Naive thymus-derived CD4-positive, alpha-beta T cell (primary cell): ENCODE measurements at regions of chr12 and their contacts with region 1.

Region 1: GRCh38 chr12:111451649-111452129 is 46.0 kb downstream of the SH2B3 start:
- DNase-seq: peak in 7 of 9 donors; percentile 48 to 78 (median 73)
- ATAC-seq: peak; percentile 77
- H3K4me3 ChIP-seq: no peak overlapping the region
- H3K4me3 Mint-ChIP-seq: peak overlapping the region in 1 of 10 donors; percentile 13
- H3K27ac ChIP-seq: peak overlapping the region; percentile 12
- H3K27ac Mint-ChIP-seq: peak overlapping the region in 8 of 9 donors; percentile 0 to 81 (median 25)
- H3K4me1 ChIP-seq: peaks cover 6 to 17% of the 10 kb centered on the region in 2 donors
- H3K4me1 Mint-ChIP-seq: peaks cover 12 to 50% (median 29%) of the 10 kb centered on the region in 7 donors
- H3K27me3 ChIP-seq: no peaks in the 10 kb centered on the region
- H3K27me3 Mint-ChIP-seq: no peaks in the 10 kb centered on the region

Region 2: GRCh38 chr12:111405149-111405860 is 46.4 kb before region 1 on chr12:
- CTCF ChIA-PET with region 1: interaction called, 462 read pairs
- POLR2A ChIA-PET with region 1: interaction called, 64 read pairs
- intact Hi-C with region 1: loop called (anchors 1 kb)
- DNase-seq: peak; percentile 96 to 98 (median 97)
- ATAC-seq: peak; percentile 89
- H3K4me3 ChIP-seq: peak overlapping the region; percentile 68
- H3K4me3 Mint-ChIP-seq: peak overlapping the region; percentile 78 to 96 (median 90)
- H3K27ac ChIP-seq: peak overlapping the region; percentile 97
- H3K27ac Mint-ChIP-seq: peak overlapping the region; percentile 75 to 96 (median 89)
- H3K4me1 ChIP-seq: peaks cover 50 to 53% of the 10 kb centered on the region in 2 donors
- H3K4me1 Mint-ChIP-seq: peaks cover 34 to 63% (median 53%) of the 10 kb centered on the region in 7 donors
- H3K27me3 ChIP-seq: no peaks in the 10 kb centered on the region
- H3K27me3 Mint-ChIP-seq: no peaks in the 10 kb centered on the region

Region 3: GRCh38 chr12:111434680-111435338 is 16.9 kb before region 1 on chr12:
- CTCF ChIA-PET with region 1: interaction called, 32 read pairs
- POLR2A ChIA-PET with region 1: interaction called, 14 read pairs
- intact Hi-C with region 1: loop called (anchors 1 to 2 kb)
- DNase-seq: peak; percentile 62 to 94 (median 83)
- ATAC-seq: peak; percentile 83
- H3K4me3 ChIP-seq: peak overlapping the region; percentile 56
- H3K4me3 Mint-ChIP-seq: peak overlapping the region; percentile 68 to 88 (median 85)
- H3K27ac ChIP-seq: peak overlapping the region; percentile 94
- H3K27ac Mint-ChIP-seq: peak overlapping the region; percentile 97 to 99 (median 99)
- H3K4me1 ChIP-seq: peaks cover 84% of the 10 kb centered on the region in 2 donors
- H3K4me1 Mint-ChIP-seq: peaks cover 79 to 96% (median 91%) of the 10 kb centered on the region in 7 donors
- H3K27me3 ChIP-seq: no peaks in the 10 kb centered on the region
- H3K27me3 Mint-ChIP-seq: no peaks in the 10 kb centered on the region

Region 4: DNA sequence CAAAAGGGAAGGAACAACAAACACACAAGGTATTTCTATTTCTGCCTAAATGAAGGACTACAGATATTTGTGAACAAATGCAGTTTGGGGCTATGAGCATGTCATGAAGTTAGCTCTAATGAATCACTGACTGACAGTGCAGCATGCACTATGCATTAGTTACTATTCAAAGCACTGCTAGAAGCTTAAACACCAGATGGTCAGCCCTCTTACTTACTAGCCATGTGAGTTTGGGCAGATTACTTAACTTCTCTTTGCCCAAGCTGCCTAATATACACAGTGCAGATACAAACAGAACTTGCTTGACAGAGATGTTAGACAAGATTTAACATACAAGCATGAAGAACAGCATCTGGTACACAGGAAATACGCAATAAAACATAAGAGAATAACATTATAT is 51.4 kb after region 1 on chr12:
- CTCF ChIA-PET with region 1: no interaction called
- POLR2A ChIA-PET with region 1: no interaction called
- intact Hi-C with region 1: no loop called
- DNase-seq: no peak
- ATAC-seq: no peak
- H3K4me3 ChIP-seq: no peak overlapping the region
- H3K4me3 Mint-ChIP-seq: no peak overlapping the region
- H3K27ac ChIP-seq: no peak overlapping the region
- H3K27ac Mint-ChIP-seq: peak overlapping the region in 1 of 9 donors; percentile 41
- H3K4me1 ChIP-seq: peaks cover 0 to 7% of the 10 kb centered on the region in 2 donors
- H3K4me1 Mint-ChIP-seq: peaks cover 0 to 17% (median 0%) of the 10 kb centered on the region in 7 donors
- H3K27me3 ChIP-seq: no peaks in the 10 kb centered on the region
- H3K27me3 Mint-ChIP-seq: no peaks in the 10 kb centered on the region

Region 5: DNA sequence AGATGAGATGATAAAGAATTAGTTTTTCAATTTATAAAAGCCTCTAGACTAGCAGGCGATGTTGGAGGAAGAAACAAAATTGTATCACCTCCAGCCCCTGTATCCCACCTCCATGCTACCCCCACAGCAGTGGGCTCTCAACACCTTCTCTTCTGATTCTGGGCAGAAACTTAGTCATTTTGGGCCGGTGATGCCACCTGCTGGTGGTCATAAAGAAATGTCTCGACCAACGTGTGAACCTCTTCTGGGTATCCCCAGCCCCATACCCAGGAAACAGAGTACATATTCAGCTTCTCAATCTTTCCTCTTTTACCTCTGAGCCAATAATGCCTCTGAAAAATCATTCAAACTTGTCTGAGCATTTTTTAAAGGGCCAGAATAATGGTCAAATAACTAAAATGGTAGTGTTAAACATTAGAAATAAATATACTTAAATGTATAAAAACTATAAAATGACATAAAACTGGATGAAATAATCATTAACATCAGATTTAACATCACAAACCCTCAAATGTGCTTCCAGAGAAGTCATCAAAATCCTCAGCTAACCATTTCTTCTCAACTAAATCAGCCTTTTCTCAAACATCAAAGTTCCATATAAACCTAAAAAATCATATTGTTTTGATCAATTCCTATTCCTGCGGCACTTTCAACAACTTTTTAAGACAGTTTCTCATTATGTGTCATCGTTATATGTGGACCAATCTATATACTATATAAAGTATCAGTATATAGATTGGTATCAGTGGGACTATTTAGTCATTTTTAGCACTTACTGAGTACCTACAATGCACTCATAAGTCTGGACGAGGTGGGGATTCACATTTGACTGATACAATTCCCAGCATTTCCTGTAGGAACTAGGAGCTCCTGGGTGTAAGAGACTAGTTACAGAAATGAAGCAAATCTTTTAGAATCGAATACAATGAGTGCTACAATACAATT is 78.0 kb after region 1 on chr12:
- CTCF ChIA-PET with region 1: interaction called, 25 read pairs
- POLR2A ChIA-PET with region 1: no interaction called
- intact Hi-C with region 1: loop called (anchors 1 to 2 kb)
- DNase-seq: peak; percentile 25 to 65 (median 57)
- ATAC-seq: peak; percentile 85
- H3K4me3 ChIP-seq: no peak overlapping the region
- H3K4me3 Mint-ChIP-seq: no peak overlapping the region
- H3K27ac ChIP-seq: no peak overlapping the region
- H3K27ac Mint-ChIP-seq: peak overlapping the region in 2 of 9 donors; percentile 10 to 56
- H3K4me1 ChIP-seq: no peaks in the 10 kb centered on the region
- H3K4me1 Mint-ChIP-seq: peaks cover 0 to 9% (median 6%) of the 10 kb centered on the region in 7 donors
- H3K27me3 ChIP-seq: no peaks in the 10 kb centered on the region
- H3K27me3 Mint-ChIP-seq: no peaks in the 10 kb centered on the region